Naive thymus-derived CD4-positive, alpha-beta T cell (primary cell): ENCODE measurements at regions of chr5 and their contacts with region 1.

Region 1: DNA sequence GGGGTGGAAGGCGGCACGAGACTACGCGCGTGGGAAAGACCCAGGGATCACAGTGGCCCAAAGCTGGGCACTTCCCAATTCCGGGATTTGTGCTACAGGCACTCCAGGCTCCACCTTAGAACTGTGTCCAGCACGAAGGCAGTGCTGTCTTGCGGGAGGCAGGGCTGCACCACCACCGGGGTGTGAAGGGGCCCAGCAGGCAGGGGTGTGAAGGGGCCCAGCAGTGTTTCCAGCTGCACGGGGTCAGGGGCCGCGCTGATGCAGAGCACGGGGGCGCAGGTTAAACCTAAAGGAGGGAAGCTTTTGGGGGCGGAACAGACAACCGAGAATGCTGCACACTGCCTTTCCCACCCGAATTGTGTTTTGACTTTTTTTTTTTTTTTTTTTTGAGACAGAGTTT is 1.1 kb upstream of the PDCD6 start:
- DNase-seq: no peak
- ATAC-seq: no peak
- H3K4me3 ChIP-seq: no peak overlapping the region
- H3K4me3 Mint-ChIP-seq: peak overlapping the region; percentile 72 to 95 (median 91)
- H3K27ac ChIP-seq: no peak overlapping the region
- H3K27ac Mint-ChIP-seq: peak overlapping the region in 8 of 9 donors; percentile 59 to 99 (median 86)
- H3K4me1 ChIP-seq: peaks cover 0 to 7% of the 10 kb centered on the region in 2 donors
- H3K4me1 Mint-ChIP-seq: peaks cover 20 to 41% (median 39%) of the 10 kb centered on the region in 7 donors
- H3K27me3 ChIP-seq: no peaks in the 10 kb centered on the region
- H3K27me3 Mint-ChIP-seq: no peaks in the 10 kb centered on the region

Region 2: DNA sequence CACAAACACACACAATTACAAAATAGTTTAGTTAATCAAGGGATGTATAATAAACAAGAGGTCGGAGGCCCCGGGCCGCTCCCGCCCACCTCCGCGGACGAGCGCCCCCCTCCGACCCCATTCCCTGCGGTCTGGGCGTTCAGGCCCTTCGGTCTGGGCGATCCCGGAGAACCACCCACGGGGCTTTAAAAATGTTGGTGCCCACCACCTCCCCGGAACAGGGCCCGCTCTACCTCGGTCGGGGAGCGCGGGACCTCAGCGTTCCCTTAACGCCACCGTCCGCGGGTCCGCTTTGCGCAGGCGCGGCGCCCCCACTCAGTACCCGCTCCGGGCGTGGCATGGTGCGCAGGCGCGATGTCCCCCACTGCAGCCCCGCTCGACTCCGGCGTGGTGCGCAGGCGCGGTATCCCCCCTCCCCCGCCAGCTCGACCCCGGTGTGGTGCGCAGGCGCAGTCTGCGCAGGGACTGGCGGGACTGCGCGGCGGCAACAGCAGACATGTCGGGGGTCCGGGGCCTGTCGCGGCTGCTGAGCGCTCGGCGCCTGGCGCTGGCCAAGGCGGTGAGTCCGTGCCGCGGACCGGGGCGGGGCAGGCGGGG is 52.4 kb before region 1 on chr5 and contains the starts of genes CCDC127 and SDHA:
- CTCF ChIA-PET with region 1: no interaction called
- POLR2A ChIA-PET with region 1: interaction called, 27 read pairs
- intact Hi-C with region 1: loop called (anchors 1 kb)
- DNase-seq: peak; percentile 94 to 100 (median 98)
- ATAC-seq: peak; percentile 90
- H3K4me3 ChIP-seq: peak within 1 kb of the TSS; percentile 65
- H3K4me3 Mint-ChIP-seq: peak within 1 kb of the TSS; percentile 93 to 97 (median 96)
- H3K27ac ChIP-seq: peak within 1 kb of the TSS; percentile 92
- H3K27ac Mint-ChIP-seq: peak within 1 kb of the TSS; percentile 87 to 97 (median 95)
- H3K4me1 ChIP-seq: peaks cover 13 to 14% of the 10 kb centered on the region in 2 donors
- H3K4me1 Mint-ChIP-seq: peaks cover 44 to 69% (median 57%) of the 10 kb centered on the region in 7 donors
- H3K27me3 ChIP-seq: no peaks in the 10 kb centered on the region
- H3K27me3 Mint-ChIP-seq: peaks cover 0 to 2% (median 0%) of the 10 kb centered on the region in 5 donors
- total RNA-seq, gene CCDC127: 2.9 to 9.7 (median 6.5) TPM
- total RNA-seq, gene SDHA: 120 to 180 (median 148) TPM

Region 3: GRCh38 chr5:321230-321725 is 50.9 kb after region 1 on chr5 and contains the start of gene AHRR:
- CTCF ChIA-PET with region 1: no interaction called
- POLR2A ChIA-PET with region 1: no interaction called
- intact Hi-C with region 1: loop called in 1 of 2 experiments (anchors 5 kb)
- DNase-seq: peak in 1 of 9 donors; percentile 86
- ATAC-seq: peak; percentile 48
- H3K4me3 ChIP-seq: no peak within 1 kb of the TSS
- H3K4me3 Mint-ChIP-seq: peak within 1 kb of the TSS in 9 of 10 donors; percentile 42 to 85 (median 69)
- H3K27ac ChIP-seq: no peak within 1 kb of the TSS
- H3K27ac Mint-ChIP-seq: peak within 1 kb of the TSS in 1 of 9 donors; percentile 55
- H3K4me1 ChIP-seq: no peaks in the 10 kb centered on the region
- H3K4me1 Mint-ChIP-seq: peaks cover 0 to 21% (median 12%) of the 10 kb centered on the region in 7 donors
- H3K27me3 ChIP-seq: no peaks in the 10 kb centered on the region
- H3K27me3 Mint-ChIP-seq: peaks cover 19 to 37% (median 30%) of the 10 kb centered on the region in 5 donors
- total RNA-seq, gene AHRR: 0.56 to 23.5 (median 1.4) TPM

Region 4: GRCh38 chr5:472656-473553 is 202.6 kb after region 1 on chr5:
- CTCF ChIA-PET with region 1: no interaction called
- POLR2A ChIA-PET with region 1: no interaction called
- intact Hi-C with region 1: loop called in 1 of 2 experiments (anchors 1 kb)
- DNase-seq: peak; percentile 82 to 97 (median 90)
- ATAC-seq: peak; percentile 89
- H3K4me3 ChIP-seq: peak overlapping the region; percentile 82
- H3K4me3 Mint-ChIP-seq: peak overlapping the region; percentile 80 to 91 (median 84)
- H3K27ac ChIP-seq: peak overlapping the region; percentile 95
- H3K27ac Mint-ChIP-seq: peak overlapping the region in 6 of 9 donors; percentile 15 to 89 (median 84)
- H3K4me1 ChIP-seq: peaks cover 14 to 18% of the 10 kb centered on the region in 2 donors
- H3K4me1 Mint-ChIP-seq: peaks cover 13 to 22% (median 19%) of the 10 kb centered on the region in 7 donors
- H3K27me3 ChIP-seq: peaks cover 0 to 3% of the 10 kb centered on the region in 2 donors
- H3K27me3 Mint-ChIP-seq: peaks cover 0 to 10% (median 8%) of the 10 kb centered on the region in 5 donors

Region 5: DNA sequence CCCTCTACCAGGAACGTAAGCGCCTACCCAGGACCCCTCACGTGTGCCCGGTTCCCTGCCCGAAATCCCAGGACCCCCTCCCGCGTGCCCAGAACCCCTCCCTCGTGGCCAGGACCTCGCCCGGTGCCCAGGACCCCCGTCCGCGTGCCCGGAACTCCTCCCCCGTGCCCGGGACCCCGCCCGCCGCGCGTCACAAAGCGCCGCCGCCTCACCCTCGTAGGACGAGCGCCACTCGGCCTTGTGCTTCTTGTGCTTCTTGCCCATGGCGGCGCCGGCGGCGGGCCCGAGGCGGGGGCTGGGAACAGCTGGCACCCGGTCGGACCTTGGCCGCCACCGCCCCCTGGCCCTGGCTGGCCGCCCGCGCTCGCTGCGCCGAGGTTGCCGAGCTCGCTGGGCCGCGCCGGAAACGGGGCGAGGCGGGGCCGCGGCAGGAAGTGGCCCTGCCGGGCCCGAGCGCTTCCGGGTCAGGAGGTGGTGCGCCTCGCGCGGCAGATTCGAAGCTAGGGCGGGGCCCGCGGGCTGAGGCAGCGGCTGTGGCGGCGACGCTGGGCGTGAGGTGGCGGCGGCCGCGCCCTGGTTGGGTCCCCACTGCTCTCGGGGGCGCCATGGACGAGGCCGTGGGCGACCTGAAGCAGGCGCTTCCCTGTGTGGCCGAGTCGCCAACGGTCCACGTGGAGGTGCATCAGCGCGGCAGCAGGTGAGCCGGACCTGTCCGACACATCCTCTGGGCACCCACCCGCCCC is 622.2 kb after region 1 on chr5 and contains the starts of genes BRD9 and TRIP13:
- CTCF ChIA-PET with region 1: no interaction called
- POLR2A ChIA-PET with region 1: no interaction called
- intact Hi-C with region 1: loop called in 1 of 2 experiments (anchors 5 kb)
- DNase-seq: peak; percentile 77 to 90 (median 86)
- ATAC-seq: peak; percentile 98
- H3K4me3 ChIP-seq: peak within 1 kb of the TSS; percentile 84
- H3K4me3 Mint-ChIP-seq: peak within 1 kb of the TSS; percentile 79 to 93 (median 86)
- H3K27ac ChIP-seq: peak within 1 kb of the TSS; percentile 91
- H3K27ac Mint-ChIP-seq: peak within 1 kb of the TSS; percentile 69 to 92 (median 89)
- H3K4me1 ChIP-seq: peaks cover 10 to 14% of the 10 kb centered on the region in 2 donors
- H3K4me1 Mint-ChIP-seq: peaks cover 12 to 35% (median 28%) of the 10 kb centered on the region in 7 donors
- H3K27me3 ChIP-seq: no peaks in the 10 kb centered on the region
- H3K27me3 Mint-ChIP-seq: no peaks in the 10 kb centered on the region
- total RNA-seq, gene BRD9: 63.2 to 93.2 (median 82.2) TPM
- total RNA-seq, gene TRIP13: 0.39 to 23.5 (median 0.57) TPM in 4 of 5 experiments, not detected in the other

Region 6: GRCh38 chr5:982377-983237 is 712.3 kb after region 1 on chr5:
- CTCF ChIA-PET with region 1: no interaction called
- POLR2A ChIA-PET with region 1: no interaction called
- intact Hi-C with region 1: no loop called
- DNase-seq: no peak
- ATAC-seq: no peak
- H3K4me3 ChIP-seq: no peak overlapping the region
- H3K4me3 Mint-ChIP-seq: peak overlapping the region in 1 of 10 donors; percentile 46
- H3K27ac ChIP-seq: no peak overlapping the region
- H3K27ac Mint-ChIP-seq: peak overlapping the region in 1 of 9 donors; percentile 29
- H3K4me1 ChIP-seq: no peaks in the 10 kb centered on the region
- H3K4me1 Mint-ChIP-seq: peaks cover 10 to 42% (median 12%) of the 10 kb centered on the region in 7 donors
- H3K27me3 ChIP-seq: no peaks in the 10 kb centered on the region
- H3K27me3 Mint-ChIP-seq: peaks cover 12 to 36% (median 14%) of the 10 kb centered on the region in 5 donors